OCI-LY7 (cell line): ENCODE measurements at regions of chr15 and their contacts with region 1.

Region 1: GRCh38 chr15:98518823-98519561 is 129.3 kb upstream of the IGF1R start:
- DNase-seq: peak; percentile 75
- H3K4me3 ChIP-seq: no peak overlapping the region
- H3K27ac ChIP-seq: no peak overlapping the region
- H3K4me1 ChIP-seq: no peaks in the 10 kb centered on the region
- CTCF ChIP-seq: peak; percentile 91

Region 2: DNA sequence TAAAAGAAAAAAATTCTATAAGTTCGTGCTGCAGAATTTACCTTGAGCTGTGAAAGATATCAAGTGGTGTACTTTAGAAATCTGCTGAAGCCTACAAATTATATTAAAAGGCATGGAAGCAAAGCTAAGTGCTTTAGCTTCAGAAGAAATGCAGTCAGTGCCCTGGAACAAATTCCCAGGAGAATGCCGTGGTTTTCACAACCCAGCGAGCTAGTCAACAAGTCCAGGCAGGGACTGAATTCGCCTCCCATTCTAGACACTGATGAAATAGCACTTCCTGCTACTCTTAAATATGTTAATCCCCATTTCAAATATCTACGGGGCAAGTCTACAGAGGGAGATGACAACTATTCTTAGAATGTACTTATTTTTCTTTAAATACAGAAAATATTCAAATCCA is 197.1 kb before region 1 on chr15:
- CTCF ChIA-PET with region 1: no interaction called
- POLR2A ChIA-PET with region 1: no interaction called
- intact Hi-C with region 1: no loop called
- DNase-seq: no peak
- H3K4me3 ChIP-seq: no peak overlapping the region
- H3K27ac ChIP-seq: no peak overlapping the region
- H3K4me1 ChIP-seq: no peaks in the 10 kb centered on the region
- CTCF ChIP-seq: no peak

Region 3: DNA sequence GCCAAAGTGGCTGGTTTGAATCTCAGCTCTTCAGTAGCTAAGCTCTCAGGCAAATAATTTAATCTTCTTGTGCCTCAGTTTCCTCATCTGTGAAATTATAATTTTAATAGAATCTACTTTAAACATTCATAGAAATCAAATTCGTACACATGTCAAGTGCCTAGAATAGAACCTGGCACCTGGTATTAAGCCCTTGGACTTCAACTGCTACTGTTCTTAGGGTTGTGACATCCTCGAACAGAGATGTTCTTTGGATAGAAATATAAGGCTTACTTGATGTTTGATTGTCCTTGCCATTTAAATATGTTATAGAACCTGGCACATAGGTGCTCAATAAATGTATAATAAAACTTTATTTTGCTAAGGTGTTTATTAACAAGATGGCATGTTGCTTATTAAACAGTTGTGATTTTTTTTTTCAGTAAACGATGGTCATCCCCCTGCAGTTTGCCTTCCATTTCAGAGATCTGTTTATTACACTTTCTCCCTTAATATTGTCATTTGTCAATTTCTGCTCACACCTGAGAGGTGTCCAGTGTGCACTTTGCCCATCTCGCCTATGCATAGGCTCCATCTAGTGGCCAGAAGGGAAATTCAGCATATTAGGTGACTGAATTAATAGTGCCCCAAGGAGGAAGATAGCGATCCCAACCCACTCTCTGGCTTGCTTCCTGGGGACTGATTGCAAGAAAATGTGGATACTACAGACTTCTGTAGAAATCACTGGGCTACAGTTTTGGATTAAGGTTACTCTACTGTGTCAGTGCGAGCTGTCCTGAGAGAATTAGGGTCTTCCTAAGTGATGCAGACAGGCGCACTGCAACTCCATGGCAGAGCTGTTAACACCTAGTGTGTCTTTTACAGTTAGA is 140.1 kb after region 1 on chr15:
- CTCF ChIA-PET with region 1: no interaction called
- POLR2A ChIA-PET with region 1: no interaction called
- intact Hi-C with region 1: loop called (anchors 2 kb)
- DNase-seq: peak; percentile 68
- H3K4me3 ChIP-seq: no peak overlapping the region
- H3K27ac ChIP-seq: no peak overlapping the region
- H3K4me1 ChIP-seq: peaks cover 2% of the 10 kb centered on the region
- CTCF ChIP-seq: peak; percentile 94

Region 4: GRCh38 chr15:98779463-98780071 is 260.6 kb after region 1 on chr15:
- CTCF ChIA-PET with region 1: no interaction called
- POLR2A ChIA-PET with region 1: no interaction called
- intact Hi-C with region 1: loop called (anchors 10 kb)
- DNase-seq: peak; percentile 55
- H3K4me3 ChIP-seq: no peak overlapping the region
- H3K27ac ChIP-seq: no peak overlapping the region
- H3K4me1 ChIP-seq: no peaks in the 10 kb centered on the region
- CTCF ChIP-seq: peak; percentile 95

Region 5: DNA sequence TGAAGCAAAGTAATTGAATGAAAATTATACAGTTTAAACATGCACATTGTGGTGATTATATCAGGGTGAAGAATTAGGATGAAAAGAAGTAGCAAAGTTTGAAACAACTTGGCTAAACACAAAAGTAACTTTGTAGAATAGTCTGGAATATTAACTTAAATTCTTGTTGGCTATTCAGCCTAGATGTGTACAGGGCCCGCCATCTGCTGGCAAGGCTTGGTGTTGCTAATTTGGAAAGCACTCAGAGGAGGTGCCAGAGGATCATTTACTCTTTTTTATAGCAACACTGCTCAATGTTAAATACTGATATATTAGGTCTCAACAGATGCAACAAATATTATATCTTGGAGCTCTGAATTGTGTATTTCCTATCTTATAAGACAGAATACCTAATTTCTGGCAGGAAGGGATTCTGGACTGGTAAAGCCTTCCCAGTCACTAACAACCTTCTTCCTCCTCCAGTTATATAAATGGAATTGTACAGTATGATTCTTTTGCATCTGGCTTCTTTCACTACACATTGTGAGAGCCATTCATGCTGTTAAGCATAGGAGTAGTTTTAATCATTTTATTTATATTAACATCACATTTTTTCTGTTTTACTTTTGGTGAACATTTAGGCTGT is 694.3 kb after region 1 on chr15:
- CTCF ChIA-PET with region 1: no interaction called
- POLR2A ChIA-PET with region 1: no interaction called
- intact Hi-C with region 1: loop called (anchors 5 kb)
- DNase-seq: peak; percentile 58
- H3K4me3 ChIP-seq: no peak overlapping the region
- H3K27ac ChIP-seq: no peak overlapping the region
- H3K4me1 ChIP-seq: no peaks in the 10 kb centered on the region
- CTCF ChIP-seq: peak; percentile 93